Sciatic nerve (tissue), 2 donors: ENCODE measurements at regions of chr21 and their contacts with region 1.

Region 1: DNA sequence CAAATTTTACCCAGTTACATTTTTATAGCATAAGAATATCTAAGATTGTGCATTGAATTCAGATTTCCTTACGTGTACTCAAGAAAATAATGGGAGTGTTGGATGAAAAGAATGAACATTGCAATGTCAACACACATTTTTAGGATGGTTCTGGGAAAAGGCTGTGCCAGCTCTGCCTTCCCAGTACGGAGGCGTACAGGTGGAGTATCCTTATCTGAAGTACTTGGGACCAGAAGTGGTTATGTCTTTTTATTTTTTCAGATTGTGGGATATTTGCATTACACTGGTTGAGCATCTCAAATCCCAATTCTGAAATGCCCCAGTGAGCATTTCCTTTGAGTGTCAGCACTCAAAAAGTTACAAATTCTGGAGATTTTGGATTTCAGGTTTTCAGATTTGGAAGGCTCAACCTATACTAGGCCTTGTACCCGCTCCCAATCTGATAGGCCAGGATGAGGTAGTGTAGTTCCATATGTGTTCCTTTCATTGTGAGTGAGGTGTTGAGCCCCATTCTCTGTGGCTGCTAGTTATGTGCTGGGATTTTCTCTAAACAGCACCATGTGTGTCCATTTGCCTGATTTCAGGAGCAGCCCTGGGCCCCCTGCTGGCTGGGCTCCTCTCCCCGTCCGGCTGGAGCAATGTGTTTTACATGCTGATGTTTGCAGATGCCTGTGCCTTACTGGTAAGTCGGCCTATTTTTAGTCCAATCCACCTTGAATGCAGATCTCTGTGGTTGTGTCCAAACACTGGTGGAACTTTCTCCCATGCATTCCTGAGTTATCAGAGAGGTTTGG is 60.8 kb downstream of the SLC37A1 start:
- DNase-seq: no peak
- ATAC-seq: no peak

Region 2: GRCh38 chr21:42524349-42525151 is 49.9 kb before region 1 on chr21:
- intact Hi-C with region 1: loop called (anchors 10 kb)
- DNase-seq: peak; percentile 76
- ATAC-seq: peak; percentile 89